ENCODE measurements at regions of chr12 and their contacts with region 1.

Region 1: GRCh38 chr12:68158432-68158831 is 1.1 kb downstream of the IFNG start:
- DNase-seq: peak; percentile 18
- H3K4me3 Mint-ChIP-seq: no peak overlapping the region
- H3K27ac Mint-ChIP-seq: no peak overlapping the region
- H3K4me1 Mint-ChIP-seq: no peaks in the 10 kb centered on the region
- H3K27me3 Mint-ChIP-seq: peaks cover 44% of the 10 kb centered on the region
- CTCF ChIP-seq: no peak

Region 2: DNA sequence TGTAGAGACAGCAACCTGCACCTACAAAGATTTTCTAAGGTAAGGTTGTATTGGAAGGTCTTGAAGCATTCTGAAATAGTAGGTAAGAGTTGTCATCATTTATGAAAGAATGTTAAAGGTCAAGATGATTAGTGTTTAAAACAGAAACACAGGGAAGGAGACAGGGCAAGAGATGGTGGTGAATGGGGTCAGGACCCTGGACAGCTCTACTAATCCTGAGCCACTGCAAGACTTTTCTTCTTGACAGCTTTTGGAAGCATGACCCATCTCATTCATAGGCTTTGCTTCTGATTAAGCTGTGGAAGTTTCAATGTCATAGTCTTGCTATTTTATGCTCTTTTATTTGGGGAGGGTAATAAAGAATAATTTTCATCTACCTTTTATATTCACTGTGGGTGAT is 964.7 kb before region 1 on chr12:
- CTCF ChIA-PET with region 1: interaction called, 10 read pairs
- intact Hi-C with region 1: no loop called
- DNase-seq: peak; percentile 39
- H3K4me3 Mint-ChIP-seq: no peak overlapping the region
- H3K27ac Mint-ChIP-seq: no peak overlapping the region
- H3K4me1 Mint-ChIP-seq: no peaks in the 10 kb centered on the region
- H3K27me3 Mint-ChIP-seq: peaks cover 84% of the 10 kb centered on the region
- CTCF ChIP-seq: no peak

Region 3: GRCh38 chr12:68040450-68041075 is 117.9 kb before region 1 on chr12:
- CTCF ChIA-PET with region 1: interaction called, 22 read pairs
- intact Hi-C with region 1: no loop called
- DNase-seq: peak; percentile 74
- H3K4me3 Mint-ChIP-seq: no peak overlapping the region
- H3K27ac Mint-ChIP-seq: no peak overlapping the region
- H3K4me1 Mint-ChIP-seq: no peaks in the 10 kb centered on the region
- H3K27me3 Mint-ChIP-seq: no peaks in the 10 kb centered on the region
- CTCF ChIP-seq: peak; percentile 82

Region 4: DNA sequence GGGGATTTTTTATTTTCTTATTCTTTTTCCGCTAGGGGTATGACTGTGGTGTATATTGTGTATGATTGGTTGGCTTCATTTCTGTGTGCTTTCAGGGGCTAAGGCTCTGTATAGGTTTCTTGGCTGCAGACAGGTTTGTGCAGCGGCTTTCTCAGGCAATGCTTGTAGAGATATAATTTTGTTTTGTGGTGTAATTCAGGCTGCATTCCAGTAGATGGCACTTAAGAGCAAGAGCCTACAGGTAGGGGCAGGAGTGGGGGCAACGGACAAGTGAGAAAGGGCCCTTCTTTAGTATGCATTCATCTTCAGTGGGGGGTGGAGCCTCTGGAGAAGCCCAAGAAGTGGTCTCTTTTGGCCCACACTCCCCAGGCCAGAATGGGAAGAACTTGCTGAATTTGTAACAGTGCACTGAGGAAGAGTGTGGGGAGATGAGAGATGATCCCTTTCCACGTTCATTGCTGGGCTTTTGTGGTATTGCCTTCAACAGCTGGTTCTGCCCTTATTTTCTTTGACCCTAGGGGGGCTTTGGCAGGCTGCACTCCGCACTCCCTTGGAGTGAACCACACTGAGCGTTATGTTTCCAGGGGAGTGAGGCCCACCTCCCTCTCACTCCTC is 90.6 kb before region 1 on chr12:
- CTCF ChIA-PET with region 1: no interaction called
- intact Hi-C with region 1: loop called (anchors 10 kb)
- DNase-seq: no peak
- H3K4me3 Mint-ChIP-seq: no peak overlapping the region
- H3K27ac Mint-ChIP-seq: no peak overlapping the region
- H3K4me1 Mint-ChIP-seq: no peaks in the 10 kb centered on the region
- H3K27me3 Mint-ChIP-seq: peaks cover 50% of the 10 kb centered on the region
- CTCF ChIP-seq: peak; percentile 63

Region 5: DNA sequence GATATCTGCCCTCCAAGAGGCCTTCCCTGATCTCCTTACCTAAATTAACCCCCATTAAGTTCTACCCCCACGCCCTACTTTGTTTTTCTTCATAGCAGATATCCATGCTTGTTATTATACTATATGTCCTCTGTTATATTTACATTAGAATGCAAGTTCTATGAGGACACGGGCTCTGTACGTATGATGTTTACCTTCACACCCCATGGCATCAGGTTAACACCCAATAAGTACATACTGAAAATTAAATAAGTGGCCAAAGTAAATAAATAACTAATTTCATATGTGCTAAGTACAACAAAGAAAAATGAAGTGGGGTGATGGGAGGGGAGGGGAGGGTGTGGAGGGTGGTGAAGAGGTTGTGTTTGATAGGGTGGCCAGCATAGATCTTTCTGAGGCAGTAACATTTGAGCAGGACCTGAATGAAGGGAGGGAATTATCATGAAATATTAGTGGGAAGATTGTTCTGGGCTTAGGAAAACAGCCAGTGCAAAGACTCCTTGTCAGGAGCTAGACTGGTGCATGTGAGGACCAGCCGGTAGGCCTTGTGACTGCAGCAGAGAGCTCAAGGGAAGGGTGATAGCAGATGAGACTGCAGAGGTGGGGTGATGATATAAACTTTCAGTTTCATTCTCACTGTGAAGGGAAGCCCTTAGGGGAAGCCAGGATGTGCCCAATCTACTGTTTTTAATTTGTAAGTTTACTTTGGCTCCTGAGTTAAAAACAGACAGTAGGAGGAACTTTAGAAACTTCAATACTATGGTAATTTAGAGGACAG is 82.4 kb after region 1 on chr12:
- CTCF ChIA-PET with region 1: no interaction called
- intact Hi-C with region 1: no loop called
- DNase-seq: no peak
- H3K4me3 Mint-ChIP-seq: no peak overlapping the region
- H3K27ac Mint-ChIP-seq: no peak overlapping the region
- H3K4me1 Mint-ChIP-seq: peaks cover 28% of the 10 kb centered on the region
- H3K27me3 Mint-ChIP-seq: peaks cover 3% of the 10 kb centered on the region
- CTCF ChIP-seq: no peak

Measured in Calu3 (cell line).